ENCODE measurements at regions of chr4 and their contacts with region 1.

Region 1: GRCh38 chr4:38675146-38676121 is 11.4 kb downstream of the KLF3 start:
- DNase-seq: peak; percentile 39 to 97 (median 62)
- ATAC-seq: peak; percentile 23
- H3K4me3 ChIP-seq: no peak overlapping the region
- H3K4me1 ChIP-seq: peaks cover 78% of the 10 kb centered on the region
- CTCF ChIP-seq: peak; percentile 83

Region 2: GRCh38 chr4:38078590-38079421 is 596.6 kb before region 1 on chr4:
- intact Hi-C with region 1: loop called in 1 of 2 experiments (anchors 10 kb)
- DNase-seq: peak in 1 of 3 donors; percentile 73
- ATAC-seq: peak; percentile 89
- H3K4me3 ChIP-seq: no peak overlapping the region
- H3K4me1 ChIP-seq: peaks cover 22% of the 10 kb centered on the region
- CTCF ChIP-seq: no peak

Region 3: DNA sequence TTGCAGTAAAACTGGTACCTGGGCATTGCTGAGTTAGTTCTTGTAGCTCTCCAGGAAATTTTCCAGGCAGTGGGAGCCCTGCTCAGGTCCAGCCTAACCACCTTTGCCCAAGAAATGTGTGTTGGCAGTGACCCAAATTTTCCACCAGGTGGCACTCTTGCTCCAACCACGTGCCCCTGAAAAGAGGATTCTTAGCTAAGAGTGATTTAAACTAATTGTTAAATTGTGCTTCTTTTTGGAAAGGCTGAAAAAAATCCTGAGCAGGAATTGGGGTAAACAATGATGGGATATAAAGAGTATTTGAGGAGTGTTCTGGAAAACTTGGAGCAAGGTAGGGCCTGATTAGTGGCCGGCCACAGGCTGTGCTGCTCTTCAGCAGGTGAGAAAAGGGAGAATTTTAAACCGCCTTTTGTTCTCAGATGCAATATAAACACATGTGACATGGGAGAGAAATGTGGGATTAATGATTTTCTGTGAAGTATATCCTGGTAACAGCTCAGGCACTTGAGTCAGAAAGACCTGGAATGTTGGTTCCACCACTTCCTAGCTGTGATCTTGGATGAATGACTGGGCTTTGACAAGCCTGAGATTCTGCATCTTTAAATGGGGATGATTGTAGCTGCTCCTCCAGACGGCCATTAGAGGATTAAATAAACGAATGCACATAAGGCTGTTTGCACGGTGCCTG is 495.6 kb before region 1 on chr4:
- intact Hi-C with region 1: loop called in 1 of 2 experiments (anchors 5 kb)
- DNase-seq: peak; percentile 69 to 89 (median 85)
- ATAC-seq: peak; percentile 89
- H3K4me3 ChIP-seq: no peak overlapping the region
- H3K4me1 ChIP-seq: peaks cover 16% of the 10 kb centered on the region
- CTCF ChIP-seq: peak; percentile 87

Region 4: DNA sequence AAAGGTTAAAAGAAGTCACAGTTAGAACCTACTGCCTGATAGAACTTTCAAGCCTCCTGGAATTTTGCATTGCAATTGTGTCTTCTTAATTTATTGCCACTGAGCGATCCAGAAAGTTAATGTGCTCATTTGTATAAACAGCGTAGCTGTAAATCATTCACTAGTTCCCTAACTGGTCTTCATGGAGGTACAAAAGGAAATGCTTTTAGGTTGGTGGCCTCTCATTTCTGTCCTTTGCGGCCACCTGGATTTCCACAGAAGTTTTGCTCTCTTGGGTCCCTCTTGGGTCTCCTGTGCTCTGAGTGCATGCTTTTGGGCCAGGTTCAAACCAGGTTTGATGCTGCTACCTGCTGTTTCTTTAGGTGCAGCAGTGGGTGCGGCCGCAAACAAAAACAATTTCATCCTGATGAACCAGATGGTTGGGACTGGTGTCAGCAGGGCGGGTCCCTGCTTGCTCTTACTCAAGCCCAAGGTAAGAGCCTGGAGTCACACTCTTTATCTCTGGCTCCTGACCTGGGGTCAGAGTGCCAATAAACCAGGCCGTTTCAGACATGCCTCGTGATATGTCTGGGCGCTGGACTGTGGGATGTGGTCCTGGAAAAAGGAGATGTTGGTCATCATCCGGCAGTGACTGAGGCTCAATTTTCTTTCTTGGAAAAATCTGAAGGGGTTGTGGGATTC is 445.2 kb before region 1 on chr4:
- intact Hi-C with region 1: loop called in 1 of 2 experiments (anchors 5 kb)
- DNase-seq: peak; percentile 79 to 87 (median 87)
- ATAC-seq: peak; percentile 88
- H3K4me3 ChIP-seq: no peak overlapping the region
- H3K4me1 ChIP-seq: peaks cover 19% of the 10 kb centered on the region
- CTCF ChIP-seq: no peak

Region 5: DNA sequence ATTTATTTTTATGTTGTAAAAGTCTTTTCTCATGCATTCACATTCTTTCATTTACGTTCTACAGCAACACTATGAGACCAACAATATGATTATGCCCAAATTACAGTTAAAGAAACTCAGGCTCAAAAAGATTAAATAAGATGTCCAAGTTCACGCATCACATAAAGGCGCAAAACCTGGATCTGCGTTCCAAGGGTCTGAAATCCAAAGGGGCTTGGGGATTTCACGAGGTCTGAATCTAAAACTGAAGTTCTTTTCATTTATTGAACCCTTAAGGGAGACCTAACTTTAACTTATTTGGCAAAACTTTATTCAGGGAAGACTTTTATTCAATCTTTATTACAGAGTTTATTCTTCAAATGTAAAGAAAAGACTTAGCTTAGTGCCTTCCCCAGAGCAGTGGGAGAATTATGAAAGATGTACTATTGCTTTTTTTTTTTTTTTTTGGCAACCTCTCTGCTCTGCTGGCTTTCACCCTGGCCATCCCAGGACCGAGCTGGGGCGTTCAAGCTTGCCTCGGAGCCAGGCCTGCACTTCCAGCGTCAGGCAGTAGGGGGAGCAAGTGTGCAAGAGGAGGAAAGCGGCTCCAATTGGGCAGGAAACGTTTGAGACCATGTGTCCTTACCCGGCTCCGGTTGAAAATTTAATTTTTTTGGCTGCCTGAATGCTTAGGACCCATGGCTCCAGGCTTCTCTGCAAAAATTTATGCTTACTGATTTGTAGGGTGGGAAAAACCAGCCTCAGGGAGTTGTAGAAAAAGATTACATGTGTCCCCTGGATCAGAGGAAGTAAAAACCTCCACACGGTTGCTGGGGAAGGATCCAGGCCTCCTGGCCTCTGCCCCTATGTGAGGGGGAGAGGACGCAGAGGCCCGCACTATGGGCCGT is 355.7 kb before region 1 on chr4:
- intact Hi-C with region 1: loop called (anchors 5 to 10 kb)
- DNase-seq: peak; percentile 94 to 99 (median 99)
- ATAC-seq: peak; percentile 89
- H3K4me3 ChIP-seq: peak overlapping the region; percentile 9
- H3K4me1 ChIP-seq: peaks cover 28% of the 10 kb centered on the region
- CTCF ChIP-seq: peak; percentile 99